AG04449 (cell line): ENCODE measurements at regions of chr11 and their contacts with region 1.

Region 1: GRCh38 chr11:61598886-61599868 is 18.3 kb upstream of the SYT7 start:
- DNase-seq: no peak
- H3K4me3 ChIP-seq: no peak overlapping the region
- CTCF ChIP-seq: no peak

Region 2: GRCh38 chr11:61429691-61430582 is 169.2 kb before region 1 on chr11 and contains the starts of genes CPSF7 and SDHAF2:
- CTCF ChIA-PET with region 1: no interaction called
- POLR2A ChIA-PET with region 1: no interaction called
- DNase-seq: peak; percentile 63
- H3K4me3 ChIP-seq: peak within 1 kb of the TSS; percentile 99
- CTCF ChIP-seq: no peak

Region 3: GRCh38 chr11:61587521-61588453 is 11.4 kb before region 1 on chr11:
- CTCF ChIA-PET with region 1: interaction called, 18 read pairs
- POLR2A ChIA-PET with region 1: interaction called, 3 read pairs
- DNase-seq: no peak
- H3K4me3 ChIP-seq: peak overlapping the region; percentile 30
- CTCF ChIP-seq: peak; percentile 2